CD4-positive, alpha-beta T cell (primary cell): ENCODE measurements at regions of chr12 and their contacts with region 1.

Region 1: GRCh38 chr12:66288121-66288520 is 14.2 kb upstream of the HELB start:
- DNase-seq: peak; percentile 28 to 93 (median 56)
- ATAC-seq: peak; percentile 97
- H3K4me3 ChIP-seq: peak overlapping the region; percentile 24
- H3K4me3 Mint-ChIP-seq: peak overlapping the region; percentile 55
- H3K27ac ChIP-seq: peak overlapping the region in 1 of 2 donors; percentile 25
- H3K27ac Mint-ChIP-seq: peak overlapping the region; percentile 84
- H3K4me1 ChIP-seq: peaks cover 79% of the 10 kb centered on the region
- H3K4me1 Mint-ChIP-seq: peaks cover 87% of the 10 kb centered on the region
- H3K27me3 ChIP-seq: no peaks in the 10 kb centered on the region
- H3K27me3 Mint-ChIP-seq: no peaks in the 10 kb centered on the region
- CTCF ChIP-seq: no peak

Region 2: GRCh38 chr12:65392491-65392890 is 895.6 kb before region 1 on chr12:
- CTCF ChIA-PET with region 1: no interaction called
- POLR2A ChIA-PET with region 1: no interaction called
- intact Hi-C with region 1: no loop called
- DNase-seq: no peak
- ATAC-seq: no peak
- H3K4me3 ChIP-seq: no peak overlapping the region
- H3K4me3 Mint-ChIP-seq: no peak overlapping the region
- H3K27ac ChIP-seq: no peak overlapping the region
- H3K27ac Mint-ChIP-seq: no peak overlapping the region
- H3K4me1 ChIP-seq: no peaks in the 10 kb centered on the region
- H3K4me1 Mint-ChIP-seq: no peaks in the 10 kb centered on the region
- H3K27me3 ChIP-seq: no peaks in the 10 kb centered on the region
- H3K27me3 Mint-ChIP-seq: no peaks in the 10 kb centered on the region
- CTCF ChIP-seq: no peak

Region 3: GRCh38 chr12:66130277-66131066 is 157.6 kb before region 1 on chr12 and contains the start of gene LLPH:
- CTCF ChIA-PET with region 1: no interaction called
- POLR2A ChIA-PET with region 1: interaction called, 3 read pairs
- intact Hi-C with region 1: loop called in 1 of 2 experiments (anchors 5 kb)
- DNase-seq: peak; percentile 78 to 94 (median 84)
- ATAC-seq: peak; percentile 90
- H3K4me3 ChIP-seq: peak within 1 kb of the TSS; percentile 96
- H3K4me3 Mint-ChIP-seq: peak within 1 kb of the TSS; percentile 95
- H3K27ac ChIP-seq: peak within 1 kb of the TSS; percentile 77 to 89
- H3K27ac Mint-ChIP-seq: peak within 1 kb of the TSS; percentile 96
- H3K4me1 ChIP-seq: peaks cover 13% of the 10 kb centered on the region
- H3K4me1 Mint-ChIP-seq: peaks cover 71% of the 10 kb centered on the region
- H3K27me3 ChIP-seq: no peaks in the 10 kb centered on the region
- H3K27me3 Mint-ChIP-seq: no peaks in the 10 kb centered on the region
- CTCF ChIP-seq: no peak
- total RNA-seq, gene LLPH: 27.3 to 31.0 TPM

Region 4: DNA sequence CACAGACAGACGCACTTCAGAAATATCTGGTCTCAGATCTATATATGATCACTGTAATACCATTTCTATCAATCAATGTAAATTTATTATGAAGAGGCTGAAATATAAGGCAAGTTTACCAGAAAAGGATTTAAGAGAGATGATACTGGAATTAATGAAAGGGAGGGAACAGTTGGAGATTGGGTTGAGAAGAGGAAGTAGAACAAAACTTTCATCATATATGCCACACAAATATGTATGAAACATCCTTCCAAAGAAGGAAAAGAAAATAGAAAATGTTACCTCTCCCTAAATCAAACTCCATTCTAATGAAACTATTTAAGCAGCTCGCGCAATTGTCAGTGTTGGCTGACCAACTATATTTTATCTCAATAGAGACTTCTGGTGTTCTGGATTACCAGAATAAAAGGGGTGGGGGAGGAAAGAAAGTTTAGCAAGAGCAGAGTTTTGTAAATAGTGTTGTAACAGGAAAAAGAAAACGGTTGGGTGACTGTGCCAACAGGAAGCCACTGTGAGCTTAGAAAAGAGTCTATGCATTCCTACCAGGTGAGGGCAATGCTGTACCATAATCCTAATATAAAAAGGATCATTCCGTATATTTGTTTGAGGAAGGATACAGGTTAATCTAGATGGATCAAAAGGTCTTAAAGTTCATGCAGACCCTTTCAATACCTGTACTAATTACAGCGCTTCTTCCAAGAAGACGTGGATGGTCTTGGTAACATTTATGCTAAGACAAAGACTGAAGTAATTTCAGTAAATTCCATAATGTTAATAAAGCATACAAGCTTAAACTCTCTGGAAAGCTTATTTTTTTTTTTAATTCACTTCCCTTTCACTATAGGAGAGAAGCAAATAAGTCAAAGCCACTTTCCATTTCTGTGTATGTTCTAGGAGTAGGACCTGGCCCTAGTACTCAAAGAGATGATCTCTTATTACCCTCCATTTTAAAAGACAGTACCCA is 143.0 kb before region 1 on chr12:
- CTCF ChIA-PET with region 1: no interaction called
- POLR2A ChIA-PET with region 1: no interaction called
- intact Hi-C with region 1: no loop called
- DNase-seq: peak in 3 of 14 experiments; percentile 11 to 52 (median 52)
- ATAC-seq: peak; percentile 73
- H3K4me3 ChIP-seq: no peak overlapping the region
- H3K4me3 Mint-ChIP-seq: no peak overlapping the region
- H3K27ac ChIP-seq: no peak overlapping the region
- H3K27ac Mint-ChIP-seq: peak overlapping the region; percentile 50
- H3K4me1 ChIP-seq: no peaks in the 10 kb centered on the region
- H3K4me1 Mint-ChIP-seq: peaks cover 34% of the 10 kb centered on the region
- H3K27me3 ChIP-seq: no peaks in the 10 kb centered on the region
- H3K27me3 Mint-ChIP-seq: no peaks in the 10 kb centered on the region
- CTCF ChIP-seq: peak; percentile 36

Region 5: GRCh38 chr12:66388517-66388916 is 100.4 kb after region 1 on chr12:
- CTCF ChIA-PET with region 1: no interaction called
- POLR2A ChIA-PET with region 1: no interaction called
- intact Hi-C with region 1: no loop called
- DNase-seq: peak in 3 of 14 experiments; percentile 12 to 31 (median 22)
- ATAC-seq: no peak
- H3K4me3 ChIP-seq: no peak overlapping the region
- H3K4me3 Mint-ChIP-seq: no peak overlapping the region
- H3K27ac ChIP-seq: no peak overlapping the region
- H3K27ac Mint-ChIP-seq: no peak overlapping the region
- H3K4me1 ChIP-seq: peaks cover 4% of the 10 kb centered on the region
- H3K4me1 Mint-ChIP-seq: peaks cover 10% of the 10 kb centered on the region
- H3K27me3 ChIP-seq: no peaks in the 10 kb centered on the region
- H3K27me3 Mint-ChIP-seq: peaks cover 8% of the 10 kb centered on the region
- CTCF ChIP-seq: no peak